ENCODE measurements at regions of chr6 and their contacts with region 1.

Region 1: DNA sequence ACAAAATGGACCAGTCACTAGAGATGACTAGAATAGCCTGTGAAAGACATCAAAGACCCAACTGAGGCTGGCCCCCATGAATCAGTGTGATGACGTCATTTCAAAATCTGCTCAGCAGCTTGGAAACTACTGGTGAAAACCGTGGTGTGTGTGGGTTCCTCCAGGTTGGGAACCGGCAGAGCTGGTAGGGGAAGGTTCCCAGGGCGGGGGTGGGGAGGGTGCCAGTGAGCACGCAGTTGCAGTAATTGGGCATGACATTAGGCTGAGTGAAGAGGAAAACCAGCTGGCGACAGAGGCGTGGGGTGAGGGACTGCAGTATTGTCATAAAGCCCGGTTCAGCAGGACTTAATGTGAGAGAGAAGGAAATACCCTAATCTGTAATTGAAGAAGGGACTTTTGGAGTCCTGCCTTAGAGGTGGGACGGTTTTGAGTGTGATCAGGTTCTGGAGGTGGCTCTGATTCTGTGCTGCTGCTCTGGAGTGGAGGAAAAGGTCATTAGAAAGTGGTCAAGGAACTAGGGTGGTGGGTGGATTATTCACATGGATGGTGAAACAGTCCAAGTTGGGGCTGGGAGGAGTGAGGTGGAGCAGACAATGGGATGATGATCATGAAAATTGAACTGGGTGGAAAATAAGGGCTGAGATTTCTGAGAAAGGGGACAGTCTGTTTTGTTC is 52.0 kb upstream of the MTHFD1L start:
- DNase-seq: no peak
- H3K4me3 ChIP-seq: no peak overlapping the region
- H3K27ac ChIP-seq: peak overlapping the region in 1 of 2 donors; percentile 22
- H3K4me1 ChIP-seq: peaks cover 0 to 8% of the 10 kb centered on the region in 2 donors
- H3K27me3 ChIP-seq: no peaks in the 10 kb centered on the region
- CTCF ChIP-seq: no peak

Region 2: GRCh38 chr6:149934249-149935156 is 879.0 kb before region 1 on chr6:
- intact Hi-C with region 1: loop called (anchors 5 kb)
- DNase-seq: peak in 1 of 2 donors; percentile 85
- H3K4me3 ChIP-seq: no peak overlapping the region
- H3K27ac ChIP-seq: no peak overlapping the region
- H3K4me1 ChIP-seq: peaks cover 0 to 10% of the 10 kb centered on the region in 2 donors
- H3K27me3 ChIP-seq: peaks cover 19% of the 10 kb centered on the region
- CTCF ChIP-seq: peak; percentile 69 to 77 (median 76)

Region 3: GRCh38 chr6:150079604-150080003 is 733.9 kb before region 1 on chr6:
- intact Hi-C with region 1: loop called (anchors 5 kb)
- DNase-seq: peak in 1 of 2 donors; percentile 43
- H3K4me3 ChIP-seq: no peak overlapping the region
- H3K27ac ChIP-seq: no peak overlapping the region
- H3K4me1 ChIP-seq: no peaks in the 10 kb centered on the region
- H3K27me3 ChIP-seq: no peaks in the 10 kb centered on the region
- CTCF ChIP-seq: no peak

Region 4: GRCh38 chr6:150417899-150418826 is 395.3 kb before region 1 on chr6:
- intact Hi-C with region 1: loop called (anchors 1 kb)
- DNase-seq: no peak
- H3K4me3 ChIP-seq: peak overlapping the region; percentile 53 to 66
- H3K27ac ChIP-seq: peak overlapping the region; percentile 35 to 37
- H3K4me1 ChIP-seq: no peaks in the 10 kb centered on the region
- H3K27me3 ChIP-seq: no peaks in the 10 kb centered on the region
- CTCF ChIP-seq: peak; percentile 73 to 79 (median 73)

Region 5: GRCh38 chr6:150600301-150601017 is 213.0 kb before region 1 on chr6:
- intact Hi-C with region 1: loop called (anchors 5 kb)
- DNase-seq: peak; percentile 39 to 88
- H3K4me3 ChIP-seq: peak overlapping the region; percentile 70 to 95
- H3K27ac ChIP-seq: peak overlapping the region; percentile 71 to 79
- H3K4me1 ChIP-seq: no peaks in the 10 kb centered on the region
- H3K27me3 ChIP-seq: no peaks in the 10 kb centered on the region
- CTCF ChIP-seq: peak; percentile 39 to 62 (median 52)

Region 6: DNA sequence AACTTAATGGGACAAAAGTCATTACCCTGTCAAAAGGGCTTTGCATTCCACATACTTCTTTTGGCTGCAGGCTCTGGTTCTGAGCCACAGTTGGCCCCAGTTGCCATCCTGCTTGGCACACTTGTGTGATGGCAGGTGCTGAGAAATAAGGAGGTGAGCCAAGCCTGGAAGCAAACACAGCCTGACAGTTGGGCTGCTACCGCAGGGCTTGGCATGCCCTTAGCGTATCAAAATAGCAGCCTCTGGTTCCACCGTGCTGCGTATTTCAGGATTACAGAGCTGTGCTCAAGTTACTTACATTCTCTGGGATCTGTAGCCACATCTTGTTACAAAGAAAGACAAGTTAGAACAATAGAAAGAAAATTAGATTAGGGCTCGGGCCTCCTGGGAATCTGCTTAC is 63.1 kb after region 1 on chr6:
- intact Hi-C with region 1: loop called (anchors 2 kb)
- DNase-seq: peak in 1 of 2 donors; percentile 89
- H3K4me3 ChIP-seq: no peak overlapping the region
- H3K27ac ChIP-seq: peak overlapping the region; percentile 73 to 79
- H3K4me1 ChIP-seq: peaks cover 7 to 39% of the 10 kb centered on the region in 2 donors
- H3K27me3 ChIP-seq: no peaks in the 10 kb centered on the region
- CTCF ChIP-seq: peak; percentile 31 to 56 (median 41)

Region 7: DNA sequence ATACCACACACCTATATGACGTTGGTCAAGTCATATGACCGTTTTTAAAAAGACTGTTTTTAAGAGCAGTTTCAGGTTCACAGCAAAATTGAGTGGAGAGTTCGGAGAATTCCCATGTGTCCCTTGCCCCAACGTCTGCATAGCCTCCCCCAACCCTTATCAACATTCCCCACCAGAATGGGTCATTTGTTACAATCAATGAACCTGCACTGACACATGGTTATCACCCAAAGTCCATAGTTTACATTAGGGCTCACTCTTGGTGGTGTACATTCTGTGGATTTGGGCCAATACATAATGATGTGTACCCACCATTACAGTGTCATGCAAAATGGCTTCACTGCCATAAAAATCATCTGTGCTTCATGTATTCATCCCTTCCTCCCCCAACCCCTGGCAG is 525.9 kb after region 1 on chr6:
- intact Hi-C with region 1: loop called (anchors 5 kb)
- DNase-seq: no peak
- H3K4me3 ChIP-seq: no peak overlapping the region
- H3K27ac ChIP-seq: no peak overlapping the region
- H3K4me1 ChIP-seq: no peaks in the 10 kb centered on the region
- H3K27me3 ChIP-seq: no peaks in the 10 kb centered on the region
- CTCF ChIP-seq: no peak

Measured in ascending aorta (tissue), 2 donors.